ENCODE measurements at regions of chr19 and their contacts with region 1.

Region 1: GRCh38 chr19:54231077-54231931 is 8.5 kb upstream of the LILRB3 start:
- DNase-seq: peak; percentile 86 to 92 (median 87)
- ATAC-seq: peak; percentile 100
- H3K4me3 ChIP-seq: no peak overlapping the region
- H3K4me1 ChIP-seq: no peaks in the 10 kb centered on the region
- CTCF ChIP-seq: peak; percentile 88

Region 2: GRCh38 chr19:54115109-54116063 is 115.9 kb before region 1 on chr19 and contains the starts of genes PRPF31 and TFPT:
- intact Hi-C with region 1: no loop called
- DNase-seq: peak; percentile 95 to 99 (median 96)
- ATAC-seq: peak; percentile 95
- H3K4me3 ChIP-seq: peak within 1 kb of the TSS; percentile 56
- H3K4me1 ChIP-seq: peaks cover 15% of the 10 kb centered on the region
- CTCF ChIP-seq: no peak
- total RNA-seq, gene PRPF31: 34.3 to 54.6 (median 39.9) TPM
- total RNA-seq, gene TFPT: 9.8 to 18.2 (median 15.3) TPM

Region 3: GRCh38 chr19:54168174-54168917 is 63.0 kb before region 1 on chr19:
- intact Hi-C with region 1: loop called (anchors 5 kb)
- DNase-seq: peak; percentile 93 to 99 (median 97)
- ATAC-seq: peak; percentile 72
- H3K4me3 ChIP-seq: no peak overlapping the region
- H3K4me1 ChIP-seq: peaks cover 19% of the 10 kb centered on the region
- CTCF ChIP-seq: peak; percentile 96

Region 4: DNA sequence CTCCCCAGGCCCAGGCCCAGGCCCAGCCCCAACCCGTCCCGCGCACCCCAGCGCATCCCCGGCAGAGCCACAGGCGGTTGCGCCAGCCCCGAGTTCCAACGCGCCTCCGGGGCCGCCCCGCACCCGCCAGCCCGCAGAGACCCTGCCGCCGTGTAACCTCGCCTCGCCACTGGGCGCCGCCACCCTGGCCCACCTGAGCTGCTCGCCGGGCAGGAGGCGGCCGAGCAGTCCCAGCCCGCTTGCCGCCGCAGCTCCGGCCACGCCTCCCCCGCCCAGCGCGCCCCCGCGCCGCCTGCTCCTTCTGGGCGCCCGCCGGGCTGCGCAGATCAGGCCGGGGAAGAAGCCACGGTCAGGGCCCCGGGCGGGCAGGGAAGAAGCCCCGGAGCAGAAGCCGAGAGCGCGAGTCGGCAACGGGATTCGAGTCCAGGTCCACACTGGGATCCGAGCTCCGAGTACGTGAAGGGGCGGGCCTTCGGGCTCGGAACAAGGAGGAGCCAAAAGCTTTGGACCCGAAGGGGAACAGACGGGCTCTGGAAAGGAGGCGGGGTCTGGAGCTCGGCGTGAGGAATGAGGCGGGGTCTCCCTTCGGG is 42.1 kb before region 1 on chr19 and contains the start of gene MBOAT7:
- intact Hi-C with region 1: no loop called
- DNase-seq: no peak
- ATAC-seq: peak; percentile 7
- H3K4me3 ChIP-seq: peak within 1 kb of the TSS; percentile 45
- H3K4me1 ChIP-seq: peaks cover 29% of the 10 kb centered on the region
- CTCF ChIP-seq: no peak
- total RNA-seq, gene MBOAT7: 79.9 to 176 (median 113) TPM